Heart left ventricle (tissue), 16 donors: ENCODE measurements at regions of chr1 and their contacts with region 1.

Region 1: DNA sequence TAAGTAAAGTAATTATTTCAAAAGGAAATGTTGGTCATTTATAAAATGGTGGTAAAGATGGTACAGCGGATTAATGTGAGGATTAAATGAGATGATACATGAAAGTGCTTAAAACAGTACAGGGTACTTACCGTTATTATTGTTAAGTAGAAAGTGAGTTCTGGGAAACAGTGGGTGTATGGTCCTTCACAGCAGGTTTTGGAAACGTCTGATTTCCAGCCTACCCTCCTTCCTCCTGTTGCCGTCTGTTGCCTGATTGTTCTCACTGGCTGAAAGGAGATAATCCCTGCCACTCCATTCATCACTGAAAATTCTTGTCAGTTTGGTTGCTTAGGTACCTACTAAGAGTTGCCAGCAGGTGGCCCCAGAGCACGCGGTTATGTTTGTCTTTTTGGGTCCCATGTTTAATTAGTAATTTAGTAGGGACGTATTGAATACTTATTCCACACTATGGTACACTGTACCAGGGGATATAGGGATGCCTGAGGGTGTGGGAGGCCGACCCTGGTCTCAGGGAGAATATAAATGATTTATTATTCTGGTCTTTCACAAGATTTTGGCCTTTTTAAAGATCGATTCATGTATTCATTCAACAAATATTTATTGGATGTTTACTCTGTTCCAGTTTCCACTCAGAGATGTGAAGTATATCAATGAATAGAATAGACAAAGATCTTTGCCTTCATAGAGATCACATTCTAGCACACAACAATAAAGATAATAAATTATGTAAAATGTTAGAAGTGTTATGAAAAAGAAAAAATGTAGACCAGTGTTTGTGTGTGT is 30.8 kb upstream of the RPTN start:
- DNase-seq: peak; percentile 42 to 71 (median 57)
- ATAC-seq: peak in 3 of 4 donors; percentile 56 to 80 (median 58)
- H3K4me3 ChIP-seq: peak overlapping the region in 11 of 12 donors; percentile 33 to 80 (median 58)
- H3K27ac ChIP-seq: peak overlapping the region in 4 of 12 donors; percentile 43 to 73 (median 54)
- H3K4me1 ChIP-seq: peaks cover 0 to 10% (median 0%) of the 10 kb centered on the region in 12 donors
- H3K27me3 ChIP-seq: peaks cover 0 to under 1% (median 0%) of the 10 kb centered on the region in 9 donors
- CTCF ChIP-seq: peak; percentile 56 to 85 (median 71)
- POLR2A ChIP-seq: no peak

Region 2: DNA sequence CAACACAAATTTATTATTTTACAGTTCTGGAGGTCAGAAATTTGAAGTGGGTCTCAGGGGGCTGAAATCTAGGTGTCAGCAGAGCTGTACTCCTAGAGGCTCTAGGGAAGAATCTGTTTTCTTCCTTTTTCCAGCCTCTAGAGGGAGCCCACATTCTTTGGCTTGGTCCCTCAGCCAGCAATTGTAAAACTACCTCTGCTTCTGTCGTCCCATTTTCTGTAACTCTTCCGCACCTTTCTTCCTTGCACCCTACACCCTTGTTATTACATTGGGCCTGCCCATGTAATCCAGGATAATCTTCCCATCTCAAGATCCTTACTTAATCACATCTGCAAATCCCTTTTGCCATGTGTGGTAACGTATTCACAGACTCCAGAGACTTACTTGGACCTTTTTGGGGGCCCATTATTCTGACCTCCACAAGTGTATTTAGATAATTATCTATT is 255.8 kb before region 1 on chr1:
- intact Hi-C with region 1: loop called in 2 of 10 experiments (anchors 10 kb)
- DNase-seq: peak in 2 of 5 donors; percentile 30 to 48
- ATAC-seq: peak; percentile 71 to 91 (median 86)
- H3K4me3 ChIP-seq: no peak overlapping the region
- H3K27ac ChIP-seq: no peak overlapping the region
- H3K4me1 ChIP-seq: no peaks in the 10 kb centered on the region
- H3K27me3 ChIP-seq: no peaks in the 10 kb centered on the region
- CTCF ChIP-seq: peak; percentile 73 to 95 (median 86)
- POLR2A ChIP-seq: no peak

Region 3: DNA sequence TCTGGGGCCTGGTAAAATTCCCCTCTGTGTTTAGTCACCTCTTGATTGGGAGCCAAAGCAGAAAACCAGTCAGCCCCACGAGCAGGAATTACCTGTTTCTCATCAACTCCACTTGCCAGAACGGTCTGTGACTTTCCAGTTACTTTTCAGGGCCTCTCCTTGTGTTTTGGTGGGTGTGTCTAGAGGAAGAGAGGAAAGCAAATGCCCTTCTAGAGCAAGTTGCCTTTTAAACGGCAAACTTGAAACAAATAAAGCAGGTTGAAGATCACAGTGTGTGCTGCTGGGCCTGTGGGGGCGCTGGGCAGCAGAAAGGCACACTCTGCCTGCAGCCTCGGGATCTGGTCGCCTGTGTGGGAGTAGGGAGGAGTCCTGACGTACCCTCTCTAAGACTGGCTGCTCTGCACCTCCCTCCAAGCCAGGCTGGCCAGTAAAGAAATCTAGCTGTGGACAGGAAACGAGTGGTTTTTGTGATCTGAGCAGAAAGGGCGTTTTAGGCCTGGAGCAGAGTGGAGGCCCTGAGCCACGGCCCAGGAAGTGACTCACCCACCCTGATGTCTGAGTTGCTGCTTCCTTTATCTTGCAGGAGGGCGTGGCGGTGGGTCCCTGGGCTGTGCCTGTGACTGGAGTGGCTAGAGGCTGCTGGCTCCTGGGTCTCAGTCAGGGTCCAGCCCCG is 142.0 kb before region 1 on chr1:
- intact Hi-C with region 1: loop called in 8 of 10 experiments (anchors 1 to 2 kb)
- DNase-seq: peak; percentile 87 to 94 (median 94)
- ATAC-seq: peak; percentile 94 to 97 (median 96)
- H3K4me3 ChIP-seq: peak overlapping the region in 9 of 12 donors; percentile 2 to 42 (median 25)
- H3K27ac ChIP-seq: peak overlapping the region; percentile 73 to 97 (median 86)
- H3K4me1 ChIP-seq: peaks cover 3 to 70% (median 17%) of the 10 kb centered on the region in 12 donors
- H3K27me3 ChIP-seq: peaks cover 0 to 2% (median 0%) of the 10 kb centered on the region in 9 donors
- CTCF ChIP-seq: peak in 11 of 12 donors; percentile 15 to 76 (median 47)
- POLR2A ChIP-seq: peak in 1 of 2 donors; percentile 69

Region 4: GRCh38 chr1:152110860-152111514 is 78.9 kb before region 1 on chr1:
- intact Hi-C with region 1: no loop called
- DNase-seq: peak in 3 of 5 donors; percentile 7 to 68 (median 32)
- ATAC-seq: peak in 3 of 4 donors; percentile 34 to 57 (median 35)
- H3K4me3 ChIP-seq: peak overlapping the region; percentile 18 to 59 (median 46)
- H3K27ac ChIP-seq: no peak overlapping the region
- H3K4me1 ChIP-seq: peaks cover 5 to 49% (median 29%) of the 10 kb centered on the region in 12 donors
- H3K27me3 ChIP-seq: peaks cover 44 to 100% (median 80%) of the 10 kb centered on the region in 9 donors
- CTCF ChIP-seq: no peak
- POLR2A ChIP-seq: no peak

Region 5: GRCh38 chr1:152141974-152142584 is 47.8 kb before region 1 on chr1:
- intact Hi-C with region 1: loop called in 9 of 10 experiments (anchors 1 to 5 kb)
- DNase-seq: peak in 3 of 5 donors; percentile 24 to 45 (median 27)
- ATAC-seq: peak in 2 of 4 donors; percentile 46 to 55
- H3K4me3 ChIP-seq: no peak overlapping the region
- H3K27ac ChIP-seq: no peak overlapping the region
- H3K4me1 ChIP-seq: no peaks in the 10 kb centered on the region
- H3K27me3 ChIP-seq: peaks cover 0 to 31% (median 7%) of the 10 kb centered on the region in 9 donors
- CTCF ChIP-seq: peak; percentile 56 to 77 (median 66)
- POLR2A ChIP-seq: no peak

Region 6: GRCh38 chr1:152347116-152347728 is 157.4 kb after region 1 on chr1:
- intact Hi-C with region 1: loop called in 3 of 10 experiments (anchors 2 to 10 kb)
- DNase-seq: peak in 1 of 5 donors; percentile 8
- ATAC-seq: no peak
- H3K4me3 ChIP-seq: no peak overlapping the region
- H3K27ac ChIP-seq: no peak overlapping the region
- H3K4me1 ChIP-seq: no peaks in the 10 kb centered on the region
- H3K27me3 ChIP-seq: no peaks in the 10 kb centered on the region
- CTCF ChIP-seq: peak; percentile 64 to 91 (median 74)
- POLR2A ChIP-seq: no peak

Region 7: GRCh38 chr1:152440635-152441471 is 251.0 kb after region 1 on chr1:
- intact Hi-C with region 1: loop called in 9 of 10 experiments (anchors 1 to 5 kb)
- DNase-seq: peak; percentile 60 to 73 (median 68)
- ATAC-seq: peak; percentile 66 to 90 (median 83)
- H3K4me3 ChIP-seq: no peak overlapping the region
- H3K27ac ChIP-seq: no peak overlapping the region
- H3K4me1 ChIP-seq: peaks cover 0 to 31% (median 11%) of the 10 kb centered on the region in 12 donors
- H3K27me3 ChIP-seq: peaks cover 0 to 19% (median 0%) of the 10 kb centered on the region in 9 donors
- CTCF ChIP-seq: peak; percentile 71 to 84 (median 80)
- POLR2A ChIP-seq: no peak

Region 8: DNA sequence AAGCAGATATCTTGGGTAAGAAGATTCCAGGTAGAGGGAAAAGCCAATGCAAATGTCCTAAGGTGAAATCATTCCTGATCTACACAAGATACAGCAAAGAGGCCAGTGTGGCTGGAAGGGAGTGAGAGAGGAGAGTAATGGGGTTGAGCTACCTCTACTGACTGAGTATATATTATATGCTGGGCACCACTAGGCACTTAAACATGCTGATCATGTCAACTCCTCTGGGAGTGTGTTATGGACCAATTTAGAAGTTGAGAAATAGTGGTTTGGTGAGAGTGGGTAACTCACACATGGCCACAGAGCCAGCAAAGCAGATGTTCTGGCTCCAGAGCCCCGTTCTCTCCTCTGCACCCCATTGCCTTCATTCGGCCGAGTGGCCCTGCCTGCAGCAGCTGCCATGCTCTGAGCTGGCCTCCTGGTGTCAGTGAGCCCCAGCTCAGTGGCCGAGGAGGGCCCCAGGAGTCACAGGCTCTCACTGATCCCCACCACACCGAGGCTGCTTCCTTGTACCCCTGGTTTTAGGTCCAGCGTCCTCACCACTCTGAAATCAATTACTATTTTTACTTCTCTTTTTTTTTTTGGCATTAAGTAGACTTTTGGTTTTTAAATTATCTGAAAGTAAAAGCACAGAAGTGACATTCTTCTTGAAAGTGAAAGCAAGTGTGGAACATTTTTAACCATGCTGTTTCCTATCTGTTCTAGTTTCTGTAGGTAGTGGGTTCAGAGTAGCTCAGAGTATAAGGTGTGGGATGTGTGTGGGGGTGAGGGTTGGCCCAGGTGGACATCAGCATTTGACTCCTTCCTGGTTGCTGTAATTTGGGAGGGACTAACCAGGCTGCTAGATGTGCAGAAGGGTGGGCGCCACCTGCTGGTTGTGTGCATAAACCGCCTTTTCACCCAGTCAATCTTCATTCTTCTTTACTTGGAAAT is 270.0 kb after region 1 on chr1:
- intact Hi-C with region 1: loop called (anchors 1 to 5 kb)
- DNase-seq: peak; percentile 43 to 79 (median 61)
- ATAC-seq: peak in 3 of 4 donors; percentile 67 to 71 (median 70)
- H3K4me3 ChIP-seq: peak overlapping the region in 7 of 12 donors; percentile 6 to 19 (median 10)
- H3K27ac ChIP-seq: peak overlapping the region in 6 of 12 donors; percentile 7 to 60 (median 18)
- H3K4me1 ChIP-seq: peaks cover 0 to 13% (median 2%) of the 10 kb centered on the region in 12 donors
- H3K27me3 ChIP-seq: peaks cover 0 to 7% (median 0%) of the 10 kb centered on the region in 9 donors
- CTCF ChIP-seq: peak; percentile 61 to 85 (median 76)
- POLR2A ChIP-seq: no peak